ENCODE measurements at regions of chr17 and their contacts with region 1.

Region 1: DNA sequence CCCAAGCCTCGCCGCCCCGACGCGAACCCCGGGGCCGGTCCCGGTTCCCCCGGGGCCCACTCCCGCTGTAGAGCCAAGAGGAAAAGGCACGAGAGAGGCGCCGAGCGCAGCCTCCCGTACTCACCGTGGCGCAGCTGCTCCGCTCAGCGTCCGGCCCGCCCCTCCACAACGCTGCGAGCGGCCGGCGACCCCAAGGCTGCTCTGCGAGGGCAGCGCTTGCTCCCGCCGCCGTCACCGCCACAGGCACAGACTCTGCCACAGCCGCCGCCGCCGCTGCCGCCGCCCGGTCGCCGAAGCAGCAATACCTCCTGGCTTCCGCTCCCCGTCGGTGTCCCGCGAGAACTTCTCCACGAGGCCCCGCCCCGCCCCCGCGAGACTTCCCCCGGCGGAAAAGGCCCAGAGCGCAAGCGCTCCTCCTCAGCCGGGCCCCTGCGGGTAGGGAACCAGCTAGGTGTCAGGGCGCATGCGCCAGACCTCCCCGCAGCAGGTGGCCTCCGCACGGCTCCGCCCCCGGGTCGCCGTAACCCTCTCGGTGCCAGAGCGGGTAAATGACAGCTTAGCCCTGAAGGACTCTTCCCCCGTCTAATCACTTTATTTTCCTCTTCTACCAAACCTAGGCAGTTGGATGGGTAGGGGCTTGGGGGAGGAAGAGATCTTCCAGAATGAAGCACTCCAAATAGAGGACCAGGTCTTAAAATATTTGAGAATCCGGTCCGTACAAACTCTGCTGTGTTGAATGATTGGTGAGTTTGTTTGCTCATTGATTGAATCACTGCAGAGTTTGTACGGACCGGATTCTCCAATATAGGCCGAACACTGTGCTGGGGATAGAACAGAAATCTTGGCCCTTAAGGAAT is at the start of gene GRB2:
- DNase-seq: peak; percentile 99 to 100 (median 99)
- ATAC-seq: peak; percentile 98 to 99 (median 98)
- H3K4me3 ChIP-seq: peak within 1 kb of the TSS; percentile 67 to 100 (median 96)
- H3K27ac ChIP-seq: peak within 1 kb of the TSS; percentile 70 to 99 (median 93)
- H3K4me1 ChIP-seq: peaks cover 2 to 45% (median 26%) of the 10 kb centered on the region in 12 donors
- H3K27me3 ChIP-seq: no peaks in the 10 kb centered on the region
- CTCF ChIP-seq: peak in 1 of 12 donors; percentile 19
- POLR2A ChIP-seq: peak in 1 of 2 donors; percentile 90
- total RNA-seq, gene GRB2: 37.2 to 145 (median 67.7) TPM

Region 2: GRCh38 chr17:75289115-75289831 is 116.3 kb before region 1 on chr17 and contains the start of gene SLC25A19:
- intact Hi-C with region 1: loop called in 2 of 10 experiments (anchors 1 to 10 kb)
- DNase-seq: peak; percentile 98 to 99 (median 99)
- ATAC-seq: peak; percentile 99 to 100 (median 99)
- H3K4me3 ChIP-seq: peak within 1 kb of the TSS; percentile 57 to 96 (median 78)
- H3K27ac ChIP-seq: peak within 1 kb of the TSS; percentile 72 to 95 (median 89)
- H3K4me1 ChIP-seq: peaks cover 0 to 43% (median 4%) of the 10 kb centered on the region in 12 donors
- H3K27me3 ChIP-seq: no peaks in the 10 kb centered on the region
- CTCF ChIP-seq: peak in 5 of 12 donors; percentile 13 to 42 (median 30)
- POLR2A ChIP-seq: peak; percentile 75 to 99
- total RNA-seq, gene SLC25A19: 7.0 to 27.9 (median 11.7) TPM